HEK293 (cell line): ENCODE measurements at regions of chr12 and their contacts with region 1.

Region 1: DNA sequence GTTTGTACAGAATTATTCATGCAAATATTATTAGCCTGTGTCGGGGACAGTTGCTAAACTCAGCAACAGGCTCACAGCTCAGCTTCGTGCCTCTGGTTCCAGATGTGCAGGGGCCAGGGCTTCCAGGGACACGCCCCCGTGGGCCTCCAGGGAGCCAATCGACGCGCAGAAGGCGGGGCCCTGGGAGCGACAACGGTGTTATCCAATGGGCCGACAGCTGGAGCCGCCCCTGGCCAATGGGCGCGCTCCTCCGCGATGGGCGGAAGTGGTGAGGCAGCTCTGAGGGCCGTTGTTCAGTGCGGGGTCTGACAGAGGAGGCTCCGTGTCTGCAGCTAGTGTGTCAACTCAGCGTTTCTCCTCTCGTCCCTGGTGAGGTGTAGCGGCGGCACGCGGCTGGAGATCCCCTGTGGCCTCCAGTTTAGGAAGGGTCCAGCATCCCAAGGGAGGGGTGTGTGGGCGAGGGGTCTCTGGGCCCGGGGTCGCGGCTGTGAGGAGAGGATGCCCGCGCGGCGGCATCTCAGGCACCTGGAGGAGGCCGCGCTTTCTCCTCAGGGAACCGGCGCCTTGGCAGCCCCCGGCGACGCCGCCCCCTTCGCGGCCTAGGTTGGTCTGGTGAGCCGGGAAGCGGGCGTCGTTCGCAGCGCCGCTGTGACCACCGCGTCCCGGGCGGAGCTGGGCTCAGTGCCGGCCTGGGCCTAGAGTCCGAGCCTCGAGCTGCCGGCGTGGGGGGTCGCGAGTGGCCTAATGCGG is at the start of gene TRAFD1:
- H3K4me3 ChIP-seq: peak within 1 kb of the TSS; percentile 89
- H3K27ac ChIP-seq: peak within 1 kb of the TSS; percentile 83
- H3K4me1 ChIP-seq: peaks cover 18% of the 10 kb centered on the region
- CTCF ChIP-seq: peak; percentile 27

Region 2: GRCh38 chr12:112096667-112097066 is 28.8 kb before region 1 on chr12:
- CTCF ChIA-PET with region 1: no interaction called
- POLR2A ChIA-PET with region 1: interaction called, 10 read pairs
- H3K4me3 ChIP-seq: no peak overlapping the region
- H3K27ac ChIP-seq: no peak overlapping the region
- H3K4me1 ChIP-seq: no peaks in the 10 kb centered on the region
- CTCF ChIP-seq: no peak

Region 3: DNA sequence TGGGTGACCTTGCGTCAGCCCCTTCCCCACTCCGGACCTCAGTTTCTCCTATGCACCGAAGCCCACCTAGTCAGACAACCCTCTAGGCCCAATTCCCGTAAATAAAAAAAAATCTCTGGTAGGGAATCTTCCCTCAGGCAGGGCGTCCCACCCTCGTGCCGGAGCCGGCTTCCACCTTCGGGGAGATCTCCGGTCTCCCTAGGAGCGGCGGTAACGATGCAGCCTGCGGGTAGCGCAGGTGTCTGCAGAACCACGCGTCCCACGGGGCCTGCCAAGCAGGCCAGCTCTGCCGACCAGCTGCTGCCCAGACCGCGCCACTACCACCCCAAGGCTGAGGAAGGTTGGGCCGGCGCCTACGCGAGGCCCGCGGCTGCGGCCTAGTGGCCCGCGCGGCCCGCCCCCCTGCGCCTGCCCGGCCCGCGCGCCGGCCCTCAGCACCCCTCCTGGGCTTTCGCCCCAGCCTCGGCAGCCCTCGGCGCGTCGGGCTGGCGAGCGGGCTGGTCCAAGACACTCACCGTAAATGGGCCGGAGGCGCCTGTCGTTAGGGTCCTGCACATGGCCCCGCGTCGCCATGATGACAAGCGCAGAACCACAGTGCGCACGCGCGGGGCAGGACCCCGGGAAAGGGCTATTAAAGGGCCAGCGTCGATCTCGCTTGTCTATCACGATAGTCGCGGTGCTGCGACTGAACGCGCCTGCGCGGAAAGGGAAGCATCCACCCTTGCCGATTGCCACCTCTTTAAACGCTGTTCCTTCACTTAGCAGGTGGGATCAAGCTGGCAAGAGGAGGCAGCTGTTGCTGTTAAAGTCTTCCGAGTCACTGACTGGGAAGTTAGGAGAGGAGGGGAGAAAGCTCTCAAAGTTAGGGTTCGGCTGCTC is 17.0 kb before region 1 on chr12 and contains the start of gene NAA25:
- CTCF ChIA-PET with region 1: interaction called, 7 read pairs
- POLR2A ChIA-PET with region 1: interaction called, 53 read pairs
- H3K4me3 ChIP-seq: peak within 1 kb of the TSS; percentile 88
- H3K27ac ChIP-seq: peak within 1 kb of the TSS; percentile 95
- H3K4me1 ChIP-seq: peaks cover 18% of the 10 kb centered on the region
- CTCF ChIP-seq: peak; percentile 16; the same call in 1 of the 2 replicates